CD8-positive, alpha-beta T cell (primary cell): ENCODE measurements at regions of chr3 and their contacts with region 1.

Region 1: GRCh38 chr3:27484015-27484844 is at the start of gene SLC4A7:
- DNase-seq: peak; percentile 96 to 100 (median 99)
- ATAC-seq: peak; percentile 89
- H3K4me3 ChIP-seq: peak within 1 kb of the TSS; percentile 69 to 91
- H3K4me3 Mint-ChIP-seq: peak within 1 kb of the TSS; percentile 100
- H3K27ac ChIP-seq: peak within 1 kb of the TSS; percentile 75 to 84
- H3K27ac Mint-ChIP-seq: peak within 1 kb of the TSS; percentile 97
- H3K4me1 ChIP-seq: peaks cover 33% of the 10 kb centered on the region
- H3K4me1 Mint-ChIP-seq: peaks cover 41% of the 10 kb centered on the region
- H3K27me3 ChIP-seq: no peaks in the 10 kb centered on the region
- H3K27me3 Mint-ChIP-seq: no peaks in the 10 kb centered on the region
- CTCF ChIP-seq: no peak
- total RNA-seq, gene SLC4A7: 19.4 to 19.6 TPM

Region 2: GRCh38 chr3:25664810-25665314 is 1819.4 kb before region 1 on chr3 and contains the start of gene TOP2B:
- CTCF ChIA-PET with region 1: no interaction called
- POLR2A ChIA-PET with region 1: no interaction called
- intact Hi-C with region 1: loop called in 1 of 2 experiments (anchors 5 kb)
- DNase-seq: peak; percentile 91 to 97 (median 95)
- ATAC-seq: peak; percentile 88
- H3K4me3 ChIP-seq: peak within 1 kb of the TSS; percentile 69 to 84
- H3K4me3 Mint-ChIP-seq: peak within 1 kb of the TSS; percentile 98
- H3K27ac ChIP-seq: peak within 1 kb of the TSS; percentile 86 to 94
- H3K27ac Mint-ChIP-seq: peak within 1 kb of the TSS; percentile 100
- H3K4me1 ChIP-seq: peaks cover 36% of the 10 kb centered on the region
- H3K4me1 Mint-ChIP-seq: peaks cover 49% of the 10 kb centered on the region
- H3K27me3 ChIP-seq: no peaks in the 10 kb centered on the region
- H3K27me3 Mint-ChIP-seq: no peaks in the 10 kb centered on the region
- CTCF ChIP-seq: no peak
- total RNA-seq, gene TOP2B: 71.8 to 74.7 TPM

Region 3: DNA sequence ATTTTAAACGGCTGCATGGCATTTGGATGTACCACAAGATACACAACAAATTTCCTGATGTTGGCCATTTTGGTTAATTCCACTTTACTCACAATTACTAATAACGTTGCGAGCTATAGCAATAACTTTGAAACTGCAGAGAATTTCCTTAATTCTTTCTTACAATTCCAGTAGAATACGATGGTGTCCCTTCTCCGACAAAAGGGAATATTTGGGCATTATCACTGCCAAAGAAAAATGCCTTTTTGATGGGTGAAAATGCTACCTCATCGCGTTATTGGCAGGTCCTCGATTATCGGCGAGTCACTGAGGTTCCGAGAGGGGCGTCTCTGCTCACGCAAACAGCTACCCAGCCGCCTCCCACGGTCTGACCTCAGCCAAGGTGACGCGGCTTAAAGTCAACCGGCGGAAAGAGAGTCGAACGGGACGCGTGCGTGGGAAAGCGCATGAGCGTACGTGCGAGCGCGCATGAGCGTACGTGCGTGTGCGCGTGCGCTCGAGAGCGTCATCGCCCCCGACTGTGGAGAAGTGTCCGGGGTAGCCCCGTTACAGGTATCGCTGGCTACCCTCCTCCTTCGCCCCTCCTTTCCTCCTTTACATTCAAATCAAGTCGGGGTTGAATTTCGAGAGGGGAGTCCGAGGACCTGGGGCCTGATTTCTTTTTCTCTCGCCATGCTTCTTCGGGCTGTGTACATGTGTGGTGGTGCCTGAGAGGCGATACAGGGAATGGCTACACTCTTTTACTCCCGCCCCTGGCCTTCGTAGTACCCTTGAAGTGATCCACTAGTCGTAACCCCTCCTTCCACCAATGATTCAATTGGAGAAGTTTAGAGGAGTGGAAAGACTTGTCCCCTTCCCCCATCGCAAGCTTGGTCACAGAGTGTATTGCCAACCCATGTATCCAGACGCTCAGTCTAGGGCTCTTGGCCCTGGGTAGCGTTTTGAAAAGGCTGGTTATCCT is 1694.4 kb before region 1 on chr3 and contains the start of gene OXSM:
- CTCF ChIA-PET with region 1: no interaction called
- POLR2A ChIA-PET with region 1: no interaction called
- intact Hi-C with region 1: loop called in 1 of 2 experiments (anchors 5 kb)
- DNase-seq: peak; percentile 75 to 98 (median 89)
- ATAC-seq: peak; percentile 93
- H3K4me3 ChIP-seq: peak within 1 kb of the TSS; percentile 64 to 65
- H3K4me3 Mint-ChIP-seq: peak within 1 kb of the TSS; percentile 97
- H3K27ac ChIP-seq: peak within 1 kb of the TSS; percentile 85 to 87
- H3K27ac Mint-ChIP-seq: peak within 1 kb of the TSS; percentile 98
- H3K4me1 ChIP-seq: peaks cover 18% of the 10 kb centered on the region
- H3K4me1 Mint-ChIP-seq: peaks cover 54% of the 10 kb centered on the region
- H3K27me3 ChIP-seq: no peaks in the 10 kb centered on the region
- H3K27me3 Mint-ChIP-seq: no peaks in the 10 kb centered on the region
- CTCF ChIP-seq: no peak
- total RNA-seq, gene OXSM: 4.0 to 5.9 TPM

Region 4: DNA sequence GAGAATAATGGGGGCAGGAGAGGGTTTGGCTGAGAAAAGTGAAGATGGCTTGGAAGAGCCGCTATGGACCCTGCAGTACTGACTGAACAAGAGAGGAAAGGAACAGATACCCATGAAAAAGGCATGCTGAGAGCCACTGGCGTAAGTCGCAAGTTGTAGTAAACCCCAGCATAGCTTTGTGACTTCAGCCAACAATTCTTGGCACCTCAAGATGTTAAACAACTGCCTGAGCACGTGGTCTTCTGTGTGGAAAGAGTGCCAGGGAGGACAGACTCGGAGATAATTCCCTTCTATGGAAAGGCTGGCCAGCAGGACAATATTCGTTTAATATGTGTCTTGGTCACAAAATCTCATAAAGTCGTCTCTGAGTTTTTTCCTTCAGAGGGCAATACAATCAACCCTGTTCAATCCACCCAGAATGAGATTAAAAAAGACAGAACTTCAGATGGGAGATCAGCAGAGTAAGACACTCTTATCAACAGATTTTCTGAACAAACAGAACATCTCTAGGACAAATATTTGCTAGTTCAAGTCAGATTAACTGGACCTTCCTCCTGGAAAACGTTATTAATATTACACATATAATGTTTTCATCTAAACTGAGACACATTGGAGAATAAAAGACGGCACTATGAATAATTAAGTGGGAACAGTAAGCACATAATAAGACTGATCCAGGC is 164.2 kb before region 1 on chr3:
- CTCF ChIA-PET with region 1: no interaction called
- POLR2A ChIA-PET with region 1: no interaction called
- intact Hi-C with region 1: no loop called
- DNase-seq: no peak
- ATAC-seq: no peak
- H3K4me3 ChIP-seq: no peak overlapping the region
- H3K4me3 Mint-ChIP-seq: no peak overlapping the region
- H3K27ac ChIP-seq: no peak overlapping the region
- H3K27ac Mint-ChIP-seq: no peak overlapping the region
- H3K4me1 ChIP-seq: no peaks in the 10 kb centered on the region
- H3K4me1 Mint-ChIP-seq: no peaks in the 10 kb centered on the region
- H3K27me3 ChIP-seq: no peaks in the 10 kb centered on the region
- H3K27me3 Mint-ChIP-seq: no peaks in the 10 kb centered on the region
- CTCF ChIP-seq: no peak

Region 5: DNA sequence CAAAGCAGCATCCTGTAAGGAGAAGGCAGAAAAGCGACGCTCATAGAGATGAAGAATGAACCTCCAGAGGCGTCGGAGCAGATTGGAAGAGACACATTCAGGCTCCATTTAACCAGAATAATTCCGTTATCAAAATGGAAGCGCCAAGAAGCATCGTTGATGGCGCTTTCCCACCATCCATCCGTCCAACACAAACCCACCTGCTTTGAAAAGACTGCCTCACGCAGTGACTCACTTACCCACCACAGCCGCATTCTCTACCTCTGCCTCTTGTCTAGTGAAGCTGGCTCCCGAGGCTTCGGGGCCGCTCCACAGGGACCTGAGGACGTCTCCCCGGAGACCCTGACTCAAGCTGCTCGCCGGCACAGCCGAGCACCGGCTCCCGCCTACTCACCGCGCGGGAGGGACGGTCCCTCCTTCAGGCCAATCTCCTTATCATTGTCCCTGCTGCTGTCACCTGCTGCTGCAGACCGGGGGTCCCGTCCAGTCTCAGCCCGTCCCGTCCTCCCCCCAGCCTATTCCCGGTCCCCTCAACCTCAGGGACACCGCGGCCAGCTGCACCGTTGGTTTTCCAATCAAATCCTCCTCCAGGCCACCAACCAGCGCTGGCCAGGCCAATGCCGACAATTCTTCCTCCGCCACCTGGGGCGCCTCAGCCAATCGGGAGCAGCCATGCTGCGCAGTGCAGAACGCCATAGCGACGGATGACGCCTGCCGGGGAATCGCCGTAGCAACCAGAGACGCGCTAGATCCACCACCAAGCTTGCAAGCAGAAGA is 115.2 kb before region 1 on chr3 and contains the start of gene NEK10:
- CTCF ChIA-PET with region 1: no interaction called
- POLR2A ChIA-PET with region 1: no interaction called
- intact Hi-C with region 1: loop called (anchors 1 to 2 kb)
- DNase-seq: peak; percentile 86 to 94 (median 93)
- ATAC-seq: peak; percentile 96
- H3K4me3 ChIP-seq: peak within 1 kb of the TSS; percentile 85 to 89
- H3K4me3 Mint-ChIP-seq: peak within 1 kb of the TSS; percentile 97
- H3K27ac ChIP-seq: peak within 1 kb of the TSS; percentile 15 to 22
- H3K27ac Mint-ChIP-seq: peak within 1 kb of the TSS; percentile 81
- H3K4me1 ChIP-seq: peaks cover 8% of the 10 kb centered on the region
- H3K4me1 Mint-ChIP-seq: peaks cover 16% of the 10 kb centered on the region
- H3K27me3 ChIP-seq: no peaks in the 10 kb centered on the region
- H3K27me3 Mint-ChIP-seq: no peaks in the 10 kb centered on the region
- CTCF ChIP-seq: no peak
- total RNA-seq, gene NEK10: 0.22 to 0.94 TPM

Region 6: GRCh38 chr3:27533718-27534573 is 49.7 kb after region 1 on chr3:
- CTCF ChIA-PET with region 1: no interaction called
- POLR2A ChIA-PET with region 1: interaction called, 4 read pairs
- intact Hi-C with region 1: loop called in 1 of 2 experiments (anchors 1 kb)
- DNase-seq: peak in 5 of 9 experiments; percentile 5 to 74 (median 26)
- ATAC-seq: peak; percentile 59
- H3K4me3 ChIP-seq: no peak overlapping the region
- H3K4me3 Mint-ChIP-seq: peak overlapping the region; percentile 36
- H3K27ac ChIP-seq: peak overlapping the region in 1 of 2 experiments; percentile 87
- H3K27ac Mint-ChIP-seq: peak overlapping the region; percentile 86
- H3K4me1 ChIP-seq: no peaks in the 10 kb centered on the region
- H3K4me1 Mint-ChIP-seq: peaks cover 13% of the 10 kb centered on the region
- H3K27me3 ChIP-seq: no peaks in the 10 kb centered on the region
- H3K27me3 Mint-ChIP-seq: no peaks in the 10 kb centered on the region
- CTCF ChIP-seq: no peak

Region 7: DNA sequence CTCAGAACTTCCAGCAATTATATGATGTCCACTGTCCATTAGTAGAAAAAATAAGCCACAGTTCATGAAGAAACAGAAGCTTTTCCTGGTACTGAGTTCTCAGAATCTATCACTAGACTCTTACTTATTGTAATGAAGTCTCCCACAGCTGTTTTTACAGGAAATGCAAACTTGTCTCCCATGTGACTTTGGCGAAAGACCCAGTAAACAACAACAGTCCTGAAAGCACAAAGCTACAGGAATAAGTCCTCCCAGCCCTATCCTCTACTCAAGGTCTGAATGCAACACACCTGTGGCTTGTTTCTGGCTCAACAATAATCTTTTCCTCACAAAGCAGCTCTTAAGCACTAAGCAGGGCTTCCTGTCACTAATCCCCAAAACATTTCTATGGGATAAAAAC is 182.0 kb after region 1 on chr3:
- CTCF ChIA-PET with region 1: no interaction called
- POLR2A ChIA-PET with region 1: no interaction called
- intact Hi-C with region 1: no loop called
- DNase-seq: no peak
- ATAC-seq: no peak
- H3K4me3 ChIP-seq: no peak overlapping the region
- H3K4me3 Mint-ChIP-seq: no peak overlapping the region
- H3K27ac ChIP-seq: no peak overlapping the region
- H3K27ac Mint-ChIP-seq: no peak overlapping the region
- H3K4me1 ChIP-seq: no peaks in the 10 kb centered on the region
- H3K4me1 Mint-ChIP-seq: peaks cover 9% of the 10 kb centered on the region
- H3K27me3 ChIP-seq: no peaks in the 10 kb centered on the region
- H3K27me3 Mint-ChIP-seq: no peaks in the 10 kb centered on the region
- CTCF ChIP-seq: no peak

Region 8: DNA sequence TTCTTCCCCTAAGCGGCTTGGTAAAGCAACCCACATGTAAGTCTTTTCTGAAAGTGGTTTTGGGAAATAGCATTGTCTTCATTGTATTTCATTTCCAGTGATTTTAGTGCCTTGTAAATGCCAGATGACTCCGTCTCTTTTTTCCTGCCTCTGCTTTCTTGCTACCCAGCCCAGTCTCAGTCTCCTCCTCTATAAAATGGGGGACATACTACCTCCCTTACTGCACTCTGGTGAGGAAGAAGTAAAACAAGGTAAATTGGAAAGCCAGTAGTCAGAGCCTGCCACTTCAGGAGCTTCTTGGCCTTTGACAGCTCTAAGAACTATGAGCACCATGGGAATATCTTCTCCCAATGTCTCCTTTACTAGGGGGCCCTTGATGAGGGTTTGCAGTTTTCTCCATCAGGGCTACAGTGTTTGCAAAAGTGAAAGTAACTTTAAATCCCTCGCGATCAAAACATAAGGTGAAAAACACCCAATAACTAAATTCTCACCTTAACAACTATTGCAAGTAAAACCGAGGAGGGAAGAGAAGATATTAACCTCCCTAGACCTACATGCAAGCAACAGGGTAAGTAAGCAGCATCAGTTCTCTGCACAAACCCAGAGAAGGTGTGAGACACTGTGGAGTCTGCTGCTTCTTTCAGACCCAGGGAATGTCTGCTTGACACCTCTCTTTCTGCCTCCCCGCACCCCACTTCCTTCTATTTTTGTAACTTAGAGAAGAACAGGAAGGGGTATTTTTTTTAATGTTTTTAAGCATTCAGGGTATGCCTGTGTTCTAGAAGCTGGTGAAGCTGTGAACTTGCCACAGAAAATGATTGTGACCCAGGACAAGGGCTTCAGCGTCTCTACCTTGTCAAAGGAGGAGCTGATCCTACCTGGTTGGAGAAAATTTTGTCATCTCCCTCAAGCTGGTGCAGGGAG is 397.0 kb after region 1 on chr3:
- CTCF ChIA-PET with region 1: no interaction called
- POLR2A ChIA-PET with region 1: no interaction called
- intact Hi-C with region 1: loop called in 1 of 2 experiments (anchors 10 kb)
- DNase-seq: peak; percentile 34 to 87 (median 65)
- ATAC-seq: peak; percentile 88
- H3K4me3 ChIP-seq: peak overlapping the region; percentile 37 to 47
- H3K4me3 Mint-ChIP-seq: peak overlapping the region; percentile 86
- H3K27ac ChIP-seq: peak overlapping the region; percentile 22 to 79
- H3K27ac Mint-ChIP-seq: peak overlapping the region; percentile 93
- H3K4me1 ChIP-seq: peaks cover 65% of the 10 kb centered on the region
- H3K4me1 Mint-ChIP-seq: peaks cover 78% of the 10 kb centered on the region
- H3K27me3 ChIP-seq: no peaks in the 10 kb centered on the region
- H3K27me3 Mint-ChIP-seq: no peaks in the 10 kb centered on the region
- CTCF ChIP-seq: no peak

Region 9: DNA sequence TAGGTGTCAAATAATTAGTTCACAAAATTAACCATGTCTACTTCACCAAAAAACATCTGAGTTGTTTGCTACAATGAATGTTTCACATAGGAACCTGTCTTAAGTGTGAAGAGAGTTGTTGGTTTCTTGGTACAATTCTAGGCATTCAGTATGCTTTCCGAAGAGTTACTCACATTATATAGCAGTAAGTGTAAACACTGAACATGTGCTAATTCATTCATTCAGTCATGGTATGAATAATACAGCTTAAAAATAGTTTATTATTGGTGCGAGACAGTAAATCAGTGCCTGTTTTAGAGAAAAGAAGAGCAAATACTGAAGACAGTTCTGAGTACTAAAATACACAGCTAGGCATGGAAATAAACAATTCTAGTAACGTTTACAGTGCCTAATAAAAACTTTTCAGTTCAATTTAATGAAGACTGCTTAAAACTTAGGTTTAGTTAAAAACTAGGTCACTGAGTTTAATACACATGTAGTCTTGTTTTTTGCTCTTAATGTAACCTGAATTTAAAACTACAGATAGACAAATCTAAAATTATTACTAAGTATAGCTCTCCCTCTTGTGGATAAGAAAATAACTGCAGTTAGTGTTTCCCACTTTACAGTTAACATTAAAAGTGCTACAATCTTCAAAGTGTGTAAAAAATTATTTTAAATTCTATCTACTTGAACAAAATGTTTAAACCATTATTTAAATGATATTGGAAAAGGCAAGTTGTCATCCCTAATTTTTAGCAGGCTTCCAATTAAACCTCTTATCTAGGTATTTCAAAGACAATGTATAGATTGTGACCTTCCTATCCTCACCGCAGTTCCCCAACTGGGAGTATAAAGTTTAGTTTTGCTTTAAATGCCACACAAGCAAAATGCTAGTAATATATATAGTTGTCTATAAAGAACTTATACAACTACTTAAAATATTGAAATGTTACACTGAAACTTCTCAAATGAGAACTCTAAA is 844.2 kb after region 1 on chr3:
- CTCF ChIA-PET with region 1: no interaction called
- POLR2A ChIA-PET with region 1: no interaction called
- intact Hi-C with region 1: loop called in 1 of 2 experiments (anchors 5 kb)
- DNase-seq: peak in 2 of 9 experiments; percentile 62 to 72
- ATAC-seq: peak; percentile 32
- H3K4me3 ChIP-seq: no peak overlapping the region
- H3K4me3 Mint-ChIP-seq: no peak overlapping the region
- H3K27ac ChIP-seq: peak overlapping the region in 1 of 2 experiments; percentile 21
- H3K27ac Mint-ChIP-seq: peak overlapping the region; percentile 72
- H3K4me1 ChIP-seq: peaks cover 13% of the 10 kb centered on the region
- H3K4me1 Mint-ChIP-seq: peaks cover 31% of the 10 kb centered on the region
- H3K27me3 ChIP-seq: no peaks in the 10 kb centered on the region
- H3K27me3 Mint-ChIP-seq: no peaks in the 10 kb centered on the region
- CTCF ChIP-seq: peak; percentile 83